Activated CD4-positive, alpha-beta T cell treated with anti-CD3 and anti-CD28 coated beads, Interleukin-2, amount 10 ng/mL, durations not matched to agents 24 days and 14 days (primary cell): ENCODE measurements at regions of chr1 and their contacts with region 1.

Region 1: DNA sequence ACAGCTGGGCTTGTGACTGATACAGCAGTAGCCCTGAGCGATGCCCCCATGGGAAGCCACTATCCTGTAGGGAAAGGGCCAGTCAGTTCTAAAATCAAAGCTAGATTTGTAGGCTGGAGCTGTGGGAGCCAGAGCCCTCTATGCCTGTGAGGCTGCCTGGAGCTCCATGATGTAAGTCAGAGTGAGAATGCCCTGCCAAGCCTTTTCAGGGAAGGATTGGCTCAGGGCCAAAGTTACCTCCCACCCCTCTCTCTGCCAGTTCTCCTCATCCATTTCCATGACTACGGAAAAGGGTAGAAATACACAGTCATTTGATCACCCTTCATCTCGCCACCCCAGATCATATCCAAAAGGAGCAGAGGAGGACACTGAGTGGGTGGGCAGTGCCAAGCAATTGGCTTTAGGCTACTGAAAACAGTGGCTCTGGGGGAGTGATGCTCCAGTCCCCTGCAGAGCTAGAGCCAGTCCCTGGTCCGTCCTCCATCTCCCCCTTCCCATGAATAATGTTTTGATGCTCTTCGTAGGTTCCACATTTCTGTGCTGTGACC is 59.5 kb upstream of the KCNA3 start:
- DNase-seq: no peak
- H3K4me3 Mint-ChIP-seq: no peak overlapping the region
- H3K27ac Mint-ChIP-seq: no peak overlapping the region
- H3K4me1 Mint-ChIP-seq: no peaks in the 10 kb centered on the region
- H3K27me3 Mint-ChIP-seq: peaks cover 13% of the 10 kb centered on the region

Region 2: DNA sequence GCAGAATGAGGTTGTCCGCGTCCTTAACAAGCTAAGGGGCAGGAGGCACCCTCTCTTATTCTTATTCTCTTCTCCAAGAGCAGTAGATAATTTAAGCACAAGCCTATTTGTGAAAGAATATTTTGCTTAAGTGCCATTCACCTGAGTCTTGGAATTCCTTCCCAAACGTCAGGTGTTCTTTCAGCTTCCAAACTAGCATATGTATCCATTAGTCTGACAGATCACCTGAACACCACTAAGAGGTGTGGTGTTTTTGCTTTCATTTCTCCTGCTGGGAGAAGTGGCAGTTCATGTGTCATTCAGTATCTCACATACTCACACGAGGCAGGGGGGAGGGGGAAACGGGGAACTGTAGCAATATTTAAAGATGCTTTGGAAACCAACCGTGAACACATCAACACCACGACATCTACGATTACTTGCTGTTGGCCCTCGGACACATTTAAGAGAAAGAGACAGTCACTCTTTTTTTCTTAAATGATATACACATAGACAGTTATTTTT is 440.6 kb before region 1 on chr1:
- intact Hi-C with region 1: no loop called
- DNase-seq: no peak
- H3K4me3 Mint-ChIP-seq: no peak overlapping the region
- H3K27ac Mint-ChIP-seq: no peak overlapping the region
- H3K4me1 Mint-ChIP-seq: no peaks in the 10 kb centered on the region
- H3K27me3 Mint-ChIP-seq: peaks cover 10% of the 10 kb centered on the region

Region 3: GRCh38 chr1:110766025-110766647 is 31.9 kb after region 1 on chr1:
- intact Hi-C with region 1: loop called (anchors 1 kb)
- DNase-seq: peak; percentile 86
- H3K4me3 Mint-ChIP-seq: peak overlapping the region; percentile 2
- H3K27ac Mint-ChIP-seq: no peak overlapping the region
- H3K4me1 Mint-ChIP-seq: peaks cover 9% of the 10 kb centered on the region
- H3K27me3 Mint-ChIP-seq: peaks cover 33% of the 10 kb centered on the region

Region 4: DNA sequence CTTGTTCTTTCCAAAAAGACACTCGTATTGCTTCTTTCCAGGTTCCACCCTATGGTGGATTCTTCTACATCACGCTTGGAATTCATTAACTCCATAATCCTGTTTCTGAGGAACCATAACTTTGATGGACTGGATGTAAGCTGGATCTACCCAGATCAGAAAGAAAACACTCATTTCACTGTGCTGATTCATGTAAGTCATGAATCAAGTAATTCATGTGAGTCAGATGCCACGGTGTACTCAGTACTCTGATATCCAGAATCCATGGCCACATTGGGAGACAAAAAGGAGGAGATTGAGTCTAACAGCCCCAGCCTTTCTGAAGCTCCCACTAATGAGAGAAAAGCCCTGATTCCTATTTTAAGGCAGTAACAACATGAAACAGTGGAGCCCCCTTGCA is 500.7 kb after region 1 on chr1:
- intact Hi-C with region 1: no loop called
- DNase-seq: no peak
- H3K4me3 Mint-ChIP-seq: no peak overlapping the region
- H3K27ac Mint-ChIP-seq: no peak overlapping the region
- H3K4me1 Mint-ChIP-seq: peaks cover 20% of the 10 kb centered on the region
- H3K27me3 Mint-ChIP-seq: no peaks in the 10 kb centered on the region